ENCODE measurements at regions of chrX and their contacts with region 1.

Region 1: DNA sequence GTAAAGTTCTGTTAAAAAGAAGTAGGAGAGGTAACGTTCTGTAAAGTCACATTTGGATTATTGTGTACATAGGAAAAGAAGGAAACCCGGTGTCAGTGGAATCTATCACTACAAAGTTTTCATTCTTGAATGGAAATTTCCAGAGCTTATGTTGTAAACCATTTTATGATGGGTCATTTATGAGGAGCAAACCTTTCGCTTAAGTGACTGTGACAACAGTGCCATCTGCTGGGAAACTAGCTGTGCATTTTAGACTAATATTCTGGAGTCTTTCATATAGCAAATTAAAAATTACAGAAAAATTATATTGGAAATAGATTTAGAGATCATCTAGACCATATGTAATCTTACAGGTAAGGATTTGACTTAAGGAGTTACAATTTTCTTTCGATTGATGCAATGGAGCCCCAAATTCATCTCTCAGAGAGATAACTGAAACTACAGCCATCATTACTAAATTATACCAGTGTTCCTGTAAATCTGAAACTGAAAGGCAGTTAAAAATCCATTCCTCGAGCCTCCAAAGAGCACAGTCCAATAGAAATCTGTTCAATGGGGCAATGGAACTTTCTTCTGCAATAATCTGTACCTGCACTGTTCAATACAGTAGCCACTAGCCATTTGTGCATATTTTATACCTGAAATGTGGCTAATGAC is 26.9 kb downstream of the ASB9 start:
- DNase-seq: peak in 4 of 5 donors; percentile 21 to 41 (median 34)
- H3K4me3 ChIP-seq: no peak overlapping the region
- H3K4me3 Mint-ChIP-seq: no peak overlapping the region
- H3K27ac ChIP-seq: no peak overlapping the region
- H3K27ac Mint-ChIP-seq: no peak overlapping the region
- H3K4me1 ChIP-seq: no peaks in the 10 kb centered on the region
- H3K4me1 Mint-ChIP-seq: peaks cover 0 to 8% (median 2%) of the 10 kb centered on the region in 4 donors
- H3K27me3 ChIP-seq: no peaks in the 10 kb centered on the region
- H3K27me3 Mint-ChIP-seq: no peaks in the 10 kb centered on the region

Region 2: DNA sequence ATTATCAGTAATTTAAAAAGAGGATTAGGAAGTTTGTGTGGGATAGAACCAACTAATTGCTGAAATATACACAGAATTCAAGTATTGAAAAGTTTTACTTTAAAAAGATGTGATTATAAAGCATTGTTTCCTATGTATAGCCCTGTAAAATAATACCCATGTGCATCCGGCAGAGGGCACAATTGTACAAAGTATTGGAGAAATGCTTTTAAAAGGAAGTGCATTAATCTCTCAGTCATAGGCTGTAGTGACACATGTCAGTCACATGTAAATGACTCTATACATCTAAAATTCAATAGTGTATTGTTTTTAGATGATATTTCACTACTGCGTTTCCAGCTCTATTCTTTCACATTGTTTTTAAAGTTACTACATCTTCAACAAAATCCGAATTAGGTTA is 1203.7 kb before region 1 on chrX:
- CTCF ChIA-PET with region 1: interaction called, 5 read pairs
- POLR2A ChIA-PET with region 1: no interaction called
- intact Hi-C with region 1: loop called (anchors 1 kb)
- DNase-seq: peak; percentile 59 to 68 (median 65)
- H3K4me3 ChIP-seq: no peak overlapping the region
- H3K4me3 Mint-ChIP-seq: no peak overlapping the region
- H3K27ac ChIP-seq: no peak overlapping the region
- H3K27ac Mint-ChIP-seq: no peak overlapping the region
- H3K4me1 ChIP-seq: no peaks in the 10 kb centered on the region
- H3K4me1 Mint-ChIP-seq: no peaks in the 10 kb centered on the region
- H3K27me3 ChIP-seq: no peaks in the 10 kb centered on the region
- H3K27me3 Mint-ChIP-seq: peaks cover 0 to 2% of the 10 kb centered on the region in 2 donors